Activated CD4-positive, alpha-beta T cell treated with anti-CD3 and anti-CD28 coated beads, Interleukin-2, amount 10 ng/mL, durations not matched to agents 24 days and 14 days (primary cell): ENCODE measurements at regions of chr3 and their contacts with region 1.

Region 1: DNA sequence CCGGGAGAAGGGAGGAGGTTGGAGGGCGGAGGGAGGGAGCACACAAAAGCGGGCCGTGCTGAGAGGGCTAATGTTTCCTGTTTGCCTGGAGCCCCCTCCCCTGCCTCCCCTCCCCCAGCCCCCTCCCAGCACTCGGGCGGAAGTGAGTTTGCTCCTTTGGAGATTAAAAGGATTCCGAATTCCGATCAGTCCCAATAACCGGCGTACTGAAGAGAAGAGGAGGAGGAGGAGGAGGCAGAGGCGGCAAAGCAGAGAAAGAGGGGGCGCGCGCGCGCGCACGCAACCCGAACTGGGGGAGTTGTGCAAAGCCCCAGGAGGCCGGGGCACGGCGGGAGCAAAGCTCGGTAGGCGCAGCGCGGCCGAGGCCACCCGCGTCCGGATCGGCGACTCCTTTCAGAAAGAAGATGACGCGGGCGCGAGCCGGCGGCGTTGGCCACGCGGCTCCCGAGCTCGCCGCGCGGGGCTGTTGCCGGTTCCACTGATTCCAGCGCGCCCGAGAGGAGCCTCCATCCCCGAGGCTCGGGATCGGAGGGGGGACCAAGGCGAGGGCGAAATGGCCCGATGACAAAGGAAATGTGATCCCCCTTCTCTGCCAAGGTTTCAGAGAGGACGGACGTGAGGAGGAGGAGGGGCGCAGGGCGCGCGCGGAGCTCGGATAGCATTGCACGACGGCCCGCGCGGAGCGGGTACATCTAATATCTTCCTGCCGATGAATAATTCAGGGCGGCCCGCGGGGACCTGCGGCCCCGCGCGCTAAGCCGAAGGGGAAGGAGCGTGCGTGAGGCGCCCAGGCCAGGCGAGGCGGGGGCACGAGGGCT is 1.1 kb upstream of the TRIM71 start:
- DNase-seq: peak; percentile 75
- H3K4me3 Mint-ChIP-seq: peak overlapping the region; percentile 84
- H3K27ac Mint-ChIP-seq: peak overlapping the region; percentile 60
- H3K4me1 Mint-ChIP-seq: peaks cover 14% of the 10 kb centered on the region
- H3K27me3 Mint-ChIP-seq: peaks cover 67% of the 10 kb centered on the region

Region 2: GRCh38 chr3:32781210-32781968 is 35.3 kb before region 1 on chr3:
- intact Hi-C with region 1: loop called (anchors 1 kb)
- DNase-seq: peak; percentile 91
- H3K4me3 Mint-ChIP-seq: peak overlapping the region; percentile 94
- H3K27ac Mint-ChIP-seq: peak overlapping the region; percentile 67
- H3K4me1 Mint-ChIP-seq: peaks cover 4% of the 10 kb centered on the region
- H3K27me3 Mint-ChIP-seq: peaks cover 11% of the 10 kb centered on the region

Region 3: GRCh38 chr3:32794487-32795308 is 21.9 kb before region 1 on chr3:
- intact Hi-C with region 1: no loop called
- DNase-seq: no peak
- H3K4me3 Mint-ChIP-seq: no peak overlapping the region
- H3K27ac Mint-ChIP-seq: no peak overlapping the region
- H3K4me1 Mint-ChIP-seq: no peaks in the 10 kb centered on the region
- H3K27me3 Mint-ChIP-seq: peaks cover 10% of the 10 kb centered on the region

Region 4: DNA sequence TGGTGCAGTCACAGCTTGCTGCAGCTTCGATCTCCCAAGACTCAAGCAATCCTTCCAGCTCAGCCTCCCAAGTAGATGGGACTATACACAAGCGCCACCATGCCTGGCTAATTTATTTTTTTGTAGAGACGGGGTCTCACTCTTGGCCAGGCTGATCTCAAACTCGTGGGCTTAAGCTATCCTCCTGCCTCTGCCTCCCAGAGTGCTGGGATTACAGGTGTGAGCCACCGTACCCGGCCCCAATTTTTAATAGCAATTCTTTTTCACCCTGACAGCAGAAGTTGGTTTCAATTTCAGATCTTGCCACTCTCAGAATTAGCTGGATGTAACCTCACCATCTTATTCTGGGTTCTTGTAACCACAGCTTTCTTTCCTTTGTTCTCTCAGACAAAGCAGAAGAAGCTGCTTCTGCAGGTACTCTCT is 66.0 kb after region 1 on chr3:
- intact Hi-C with region 1: loop called (anchors 5 kb)
- DNase-seq: peak; percentile 79
- H3K4me3 Mint-ChIP-seq: peak overlapping the region; percentile 42
- H3K27ac Mint-ChIP-seq: no peak overlapping the region
- H3K4me1 Mint-ChIP-seq: peaks cover 13% of the 10 kb centered on the region
- H3K27me3 Mint-ChIP-seq: peaks cover 41% of the 10 kb centered on the region